ENCODE measurements at regions of chr6 and their contacts with region 1.

Region 1: DNA sequence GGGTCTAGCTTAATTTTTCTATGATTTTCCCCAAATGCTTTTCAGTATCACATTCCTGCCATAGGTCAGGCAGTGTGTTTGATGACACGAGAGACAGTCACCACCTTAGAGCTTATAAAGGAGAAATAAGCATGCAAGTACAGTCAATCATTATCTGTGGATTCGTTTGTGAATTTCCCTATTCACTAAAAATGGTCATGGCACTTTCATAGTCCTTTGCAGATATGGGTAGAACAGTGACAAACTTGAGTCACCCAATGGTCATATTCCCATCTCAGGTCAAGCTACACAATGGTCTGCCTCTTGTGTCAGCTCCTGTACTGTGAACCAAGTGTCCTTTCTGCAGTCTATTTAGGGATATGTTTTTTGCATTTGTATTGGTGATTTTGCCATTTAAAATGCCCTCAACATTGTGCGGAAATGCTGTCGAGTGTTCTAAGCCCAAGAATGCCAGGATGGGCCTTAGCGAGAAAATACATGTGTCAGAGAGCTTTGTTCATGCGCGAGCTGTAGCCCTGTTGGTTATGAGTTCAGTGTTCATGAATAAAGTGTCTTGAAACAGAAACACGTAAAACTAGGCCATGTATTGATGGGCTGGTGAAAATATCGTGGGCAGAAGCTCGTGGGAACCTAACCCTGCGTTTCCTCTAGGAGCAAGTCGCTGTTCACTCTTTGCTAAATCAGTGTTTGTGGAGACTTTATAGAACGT is 19.8 kb downstream of the SUMO4 start:
- DNase-seq: no peak
- ATAC-seq: no peak
- H3K4me3 ChIP-seq: no peak overlapping the region
- H3K27ac ChIP-seq: no peak overlapping the region
- H3K4me1 ChIP-seq: peaks cover 7% of the 10 kb centered on the region
- H3K27me3 ChIP-seq: no peaks in the 10 kb centered on the region
- CTCF ChIP-seq: no peak

Region 2: GRCh38 chr6:149200276-149200938 is 219.4 kb before region 1 on chr6:
- intact Hi-C with region 1: loop called (anchors 5 kb)
- DNase-seq: no peak
- ATAC-seq: no peak
- H3K4me3 ChIP-seq: no peak overlapping the region
- H3K27ac ChIP-seq: no peak overlapping the region
- H3K4me1 ChIP-seq: no peaks in the 10 kb centered on the region
- H3K27me3 ChIP-seq: no peaks in the 10 kb centered on the region
- CTCF ChIP-seq: no peak